ENCODE measurements at regions of chr19 and their contacts with region 1.

Region 1: GRCh38 chr19:34712395-34713261 is 21.4 kb upstream of the ZNF181 start:
- DNase-seq: no peak
- ATAC-seq: peak; percentile 78 to 81
- H3K4me3 ChIP-seq: no peak overlapping the region
- H3K27ac ChIP-seq: no peak overlapping the region
- H3K4me1 ChIP-seq: no peaks in the 10 kb centered on the region
- H3K27me3 ChIP-seq: no peaks in the 10 kb centered on the region
- CTCF ChIP-seq: peak; percentile 82

Region 2: GRCh38 chr19:34639491-34640085 is 73.0 kb before region 1 on chr19:
- intact Hi-C with region 1: loop called (anchors 5 kb)
- DNase-seq: no peak
- ATAC-seq: peak; percentile 70
- H3K4me3 ChIP-seq: no peak overlapping the region
- H3K27ac ChIP-seq: no peak overlapping the region
- H3K4me1 ChIP-seq: no peaks in the 10 kb centered on the region
- H3K27me3 ChIP-seq: no peaks in the 10 kb centered on the region
- CTCF ChIP-seq: peak; percentile 83

Region 3: GRCh38 chr19:34787057-34787824 is 74.6 kb after region 1 on chr19:
- intact Hi-C with region 1: no loop called
- DNase-seq: no peak
- ATAC-seq: no peak
- H3K4me3 ChIP-seq: no peak overlapping the region
- H3K27ac ChIP-seq: no peak overlapping the region
- H3K4me1 ChIP-seq: no peaks in the 10 kb centered on the region
- H3K27me3 ChIP-seq: no peaks in the 10 kb centered on the region
- CTCF ChIP-seq: no peak